Activated CD4-positive, alpha-beta T cell treated with anti-CD3 and anti-CD28 coated beads, Interleukin-2, amount 10 ng/mL, durations not matched to agents 24 days and 14 days (primary cell): ENCODE measurements at regions of chr6 and their contacts with region 1.

Region 1: GRCh38 chr6:25962149-25963127 is at the start of gene TRIM38:
- DNase-seq: peak; percentile 94
- H3K4me3 Mint-ChIP-seq: peak within 1 kb of the TSS; percentile 88
- H3K27ac Mint-ChIP-seq: peak within 1 kb of the TSS; percentile 96
- H3K4me1 Mint-ChIP-seq: peaks cover 75% of the 10 kb centered on the region
- H3K27me3 Mint-ChIP-seq: no peaks in the 10 kb centered on the region
- total RNA-seq, gene TRIM38: 23.0 and 24.5 TPM in 2 replicates

Region 2: GRCh38 chr6:25706314-25707014 is 256.0 kb before region 1 on chr6:
- intact Hi-C with region 1: no loop called
- DNase-seq: peak; percentile 40
- H3K4me3 Mint-ChIP-seq: no peak overlapping the region
- H3K27ac Mint-ChIP-seq: no peak overlapping the region
- H3K4me1 Mint-ChIP-seq: no peaks in the 10 kb centered on the region
- H3K27me3 Mint-ChIP-seq: peaks cover 30% of the 10 kb centered on the region

Region 3: GRCh38 chr6:25835442-25836283 is 126.8 kb before region 1 on chr6:
- intact Hi-C with region 1: no loop called
- DNase-seq: no peak
- H3K4me3 Mint-ChIP-seq: no peak overlapping the region
- H3K27ac Mint-ChIP-seq: no peak overlapping the region
- H3K4me1 Mint-ChIP-seq: no peaks in the 10 kb centered on the region
- H3K27me3 Mint-ChIP-seq: peaks cover 19% of the 10 kb centered on the region

Region 4: DNA sequence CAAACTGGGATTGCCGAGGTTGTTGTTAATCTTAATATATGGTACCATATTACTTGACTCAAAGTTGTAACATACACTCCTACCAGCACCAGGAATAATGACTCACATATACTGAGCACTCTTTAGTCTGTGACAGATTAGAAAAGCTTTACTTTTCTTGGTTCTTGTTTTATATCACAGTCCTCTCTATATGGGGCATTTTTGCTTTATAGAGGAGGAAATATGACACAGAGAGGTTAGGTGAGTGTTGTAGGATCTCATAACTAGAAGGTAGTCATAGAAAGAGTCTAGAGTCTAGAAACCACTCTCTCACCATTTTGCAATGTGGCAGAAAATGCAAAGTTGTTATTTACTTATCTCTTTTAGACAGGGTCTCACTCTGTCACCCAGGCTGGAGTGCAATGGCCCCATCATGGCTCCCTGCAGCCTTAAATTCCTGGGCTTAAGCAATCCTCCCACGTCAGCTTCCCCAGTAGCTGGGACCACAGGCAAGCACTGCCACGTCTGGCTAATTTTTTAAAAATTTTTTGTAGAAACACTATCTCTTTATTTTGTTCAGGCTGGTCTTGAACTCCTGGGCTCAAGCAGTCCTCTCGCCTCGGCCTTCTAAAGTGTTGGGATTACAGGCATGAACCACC is 13.6 kb after region 1 on chr6:
- intact Hi-C with region 1: loop called (anchors 1 kb)
- DNase-seq: no peak
- H3K4me3 Mint-ChIP-seq: no peak overlapping the region
- H3K27ac Mint-ChIP-seq: peak overlapping the region; percentile 27
- H3K4me1 Mint-ChIP-seq: peaks cover 23% of the 10 kb centered on the region
- H3K27me3 Mint-ChIP-seq: no peaks in the 10 kb centered on the region

Region 5: GRCh38 chr6:26017632-26017966 is 55.2 kb after region 1 on chr6:
- intact Hi-C with region 1: loop called (anchors 1 kb)
- DNase-seq: peak; percentile 92
- H3K4me3 Mint-ChIP-seq: peak overlapping the region; percentile 86
- H3K27ac Mint-ChIP-seq: peak overlapping the region; percentile 96
- H3K4me1 Mint-ChIP-seq: peaks cover 23% of the 10 kb centered on the region
- H3K27me3 Mint-ChIP-seq: no peaks in the 10 kb centered on the region